Thyroid gland (tissue), 4 donors: ENCODE measurements at regions of chr7 and their contacts with region 1.

Region 1: DNA sequence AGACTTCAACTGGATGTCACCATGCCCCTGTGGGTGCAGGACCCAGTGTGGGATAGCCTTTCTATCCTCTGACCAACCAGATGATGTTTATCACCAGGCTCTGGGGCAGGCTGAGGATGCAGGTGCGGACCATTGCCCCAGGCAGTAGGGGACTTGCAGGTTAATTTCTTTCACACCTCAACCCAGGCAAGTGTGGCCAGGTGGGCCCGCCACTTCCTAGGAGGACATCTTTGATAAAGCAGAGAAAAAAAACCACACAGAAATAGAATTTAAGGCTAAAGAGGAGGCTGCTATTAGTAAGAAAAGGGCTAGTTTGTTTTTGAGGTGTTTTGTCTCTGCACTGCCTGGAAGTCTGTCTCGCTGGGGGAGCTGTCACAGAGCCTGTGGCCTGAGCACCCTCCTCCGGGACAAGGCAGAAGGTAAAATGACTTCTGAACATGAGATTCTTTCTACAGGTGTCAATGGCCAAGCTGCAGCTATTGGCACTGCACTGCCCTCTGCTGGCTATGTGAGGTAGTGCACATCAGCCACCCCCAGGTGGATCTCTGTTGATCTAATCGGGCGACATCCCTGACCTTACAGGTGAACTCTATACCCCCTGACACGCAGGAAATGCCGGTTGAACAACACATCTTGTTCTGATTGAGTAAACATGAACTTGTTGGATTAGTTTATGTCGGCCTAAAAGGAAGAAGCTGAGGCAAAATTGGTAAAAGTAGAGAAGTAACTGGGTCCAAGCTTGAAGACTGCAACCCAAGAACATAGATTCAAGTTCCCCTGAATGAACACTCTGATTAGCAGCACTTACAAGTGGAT is 21.0 kb downstream of the UPP1 start:
- DNase-seq: peak; percentile 77 to 79
- H3K4me3 ChIP-seq: no peak overlapping the region
- H3K27ac ChIP-seq: no peak overlapping the region
- H3K4me1 ChIP-seq: no peaks in the 10 kb centered on the region
- H3K27me3 ChIP-seq: no peaks in the 10 kb centered on the region
- CTCF ChIP-seq: peak; percentile 93 to 99 (median 96)
- POLR2A ChIP-seq: no peak

Region 2: DNA sequence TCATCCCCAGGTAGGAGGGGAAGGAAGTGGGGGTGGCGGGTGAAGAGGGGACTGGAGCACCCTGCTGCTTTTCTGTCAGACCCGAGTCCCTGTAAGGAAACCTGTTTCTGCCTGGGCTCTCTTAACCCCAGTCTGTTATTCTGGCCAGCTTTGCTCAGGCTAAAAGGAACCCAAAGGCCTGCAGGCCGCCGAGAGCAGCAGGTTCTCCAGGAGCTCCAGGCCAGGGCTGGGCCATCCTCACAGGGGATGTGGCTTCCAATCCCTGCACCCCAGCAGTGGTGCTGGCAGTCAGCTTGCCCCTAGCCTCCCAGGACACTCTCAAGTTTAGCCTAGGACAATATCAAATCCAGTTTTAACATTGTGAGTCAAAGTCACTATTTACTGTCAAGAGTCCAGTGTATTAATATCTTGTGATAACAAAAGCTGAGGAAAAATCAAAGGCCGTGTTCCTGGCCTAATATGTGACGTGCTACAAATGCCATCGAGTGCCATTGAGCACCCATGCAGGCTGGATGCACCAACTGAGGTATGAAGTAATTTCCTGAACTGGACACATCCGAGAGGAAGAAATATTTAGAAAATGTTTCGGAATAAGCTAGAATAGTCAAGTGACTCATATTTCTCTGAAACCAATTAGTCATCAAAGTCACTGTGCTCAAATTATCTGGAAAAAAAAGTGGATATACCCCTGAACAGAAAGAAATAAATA is 168.8 kb before region 1 on chr7:
- intact Hi-C with region 1: loop called (anchors 5 kb)
- DNase-seq: no peak
- H3K4me3 ChIP-seq: no peak overlapping the region
- H3K27ac ChIP-seq: peak overlapping the region; percentile 40 to 83 (median 78)
- H3K4me1 ChIP-seq: peaks cover 0 to 23% of the 10 kb centered on the region in 2 donors
- H3K27me3 ChIP-seq: no peaks in the 10 kb centered on the region
- CTCF ChIP-seq: no peak
- POLR2A ChIP-seq: no peak

Region 3: DNA sequence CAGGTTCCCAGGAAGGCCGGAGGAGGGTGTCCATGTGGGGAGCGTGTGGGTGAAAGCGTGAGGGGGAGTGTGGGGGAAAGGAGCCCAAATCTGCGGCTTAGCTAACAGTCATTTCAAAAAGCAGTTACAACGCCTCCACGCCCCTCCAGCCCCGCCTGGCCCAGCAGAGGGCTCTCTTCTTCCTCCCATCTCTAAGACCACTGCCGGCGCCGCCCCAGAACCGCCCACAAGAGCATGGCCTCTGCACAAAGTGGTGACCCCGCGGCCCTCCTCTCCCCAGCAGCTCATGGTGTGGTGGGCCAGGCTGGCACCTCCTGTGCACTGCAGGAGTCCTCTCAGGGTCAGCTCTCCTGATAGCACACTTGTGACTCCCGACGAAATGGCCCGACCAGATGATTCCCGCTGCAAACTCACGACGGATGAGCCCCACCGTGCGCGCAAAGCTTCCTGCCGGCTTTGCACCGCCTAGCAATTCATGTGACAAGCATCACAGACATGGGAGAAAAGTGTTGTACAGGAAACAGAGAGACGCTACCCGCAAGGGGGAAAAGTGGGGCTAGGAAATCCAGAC is 118.2 kb before region 1 on chr7:
- intact Hi-C with region 1: loop called (anchors 5 kb)
- DNase-seq: peak; percentile 80
- H3K4me3 ChIP-seq: peak overlapping the region in 1 of 3 donors; percentile 37
- H3K27ac ChIP-seq: no peak overlapping the region
- H3K4me1 ChIP-seq: no peaks in the 10 kb centered on the region
- H3K27me3 ChIP-seq: no peaks in the 10 kb centered on the region
- CTCF ChIP-seq: peak; percentile 13 to 59 (median 40)
- POLR2A ChIP-seq: no peak

Region 4: GRCh38 chr7:48035301-48035966 is 74.6 kb before region 1 on chr7 and contains the start of gene C7orf57:
- intact Hi-C with region 1: loop called (anchors 10 kb)
- DNase-seq: peak; percentile 92 to 94
- H3K4me3 ChIP-seq: peak within 1 kb of the TSS; percentile 41 to 48 (median 44)
- H3K27ac ChIP-seq: no peak within 1 kb of the TSS
- H3K4me1 ChIP-seq: peaks cover 6 to 12% of the 10 kb centered on the region in 2 donors
- H3K27me3 ChIP-seq: no peaks in the 10 kb centered on the region
- CTCF ChIP-seq: peak in 3 of 6 experiments; percentile 6 to 30 (median 27)
- POLR2A ChIP-seq: no peak
- total RNA-seq, gene C7orf57: not detected